H1 (cell line): ENCODE measurements at regions of chr17 and their contacts with region 1.

Region 1: DNA sequence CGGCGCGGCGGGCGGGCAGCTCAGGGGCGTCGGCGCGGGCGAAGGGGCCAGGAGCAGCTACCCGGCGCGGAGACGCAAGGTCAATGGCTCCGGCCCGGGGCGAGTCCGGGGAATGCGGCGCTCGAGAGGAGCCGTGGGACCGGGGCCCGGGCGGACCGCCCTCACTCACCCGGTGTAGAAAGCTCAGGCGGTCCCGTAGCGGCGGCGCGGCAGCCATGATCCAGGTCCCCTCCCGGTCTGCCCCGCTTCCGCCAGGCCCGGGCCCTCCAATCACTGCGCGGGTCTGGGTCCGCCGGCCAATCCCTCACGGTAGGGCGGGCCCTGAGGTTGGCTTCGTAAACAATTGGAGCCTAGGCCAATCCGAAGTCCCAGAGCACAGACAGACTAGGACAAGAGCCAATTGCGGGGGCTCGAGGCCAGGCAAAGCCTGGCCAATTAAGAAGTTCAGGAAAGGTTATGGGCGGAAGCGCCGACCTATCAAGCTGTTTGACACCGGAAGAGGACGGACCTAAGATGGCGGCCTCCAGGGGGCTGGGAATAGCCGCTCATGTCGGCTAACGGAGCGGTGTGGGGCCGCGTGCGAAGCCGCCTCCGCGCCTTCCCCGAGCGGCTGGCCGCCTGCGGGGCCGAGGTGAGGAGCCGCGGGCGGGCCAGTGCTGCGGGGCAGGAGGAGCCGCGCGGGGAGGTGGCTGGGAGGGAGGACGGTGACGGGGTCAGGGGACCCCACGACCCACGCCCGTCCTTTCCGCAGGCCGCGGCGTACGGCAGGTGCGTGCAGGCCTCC is at the starts of genes NDUFAF8 and TEPSIN:
- DNase-seq: peak; percentile 91 to 93
- H3K4me3 ChIP-seq: peak within 1 kb of the TSS; percentile 79 to 95 (median 82)
- H3K27ac ChIP-seq: peak within 1 kb of the TSS; percentile 58; the same call in 1 of the 2 replicates
- H3K4me1 ChIP-seq: peaks cover 0 to 12% (median 9%) of the 10 kb centered on the region in 4 experiments; a peak in 5 of 7 replicates
- H3K27me3 ChIP-seq: no peaks in the 10 kb centered on the region
- CTCF ChIP-seq: no peak
- EP300 ChIP-seq: no peak
- POLR2A ChIP-seq: peak in 1 of 2 experiments; percentile 47; a peak in 2 of 3 replicates
- RAD21 ChIP-seq: no peak
- total RNA-seq, gene NDUFAF8: 48.9 and 60.2 TPM in 2 replicates
- total RNA-seq, gene TEPSIN: 22.9 and 26.0 TPM in 2 replicates

Region 2: DNA sequence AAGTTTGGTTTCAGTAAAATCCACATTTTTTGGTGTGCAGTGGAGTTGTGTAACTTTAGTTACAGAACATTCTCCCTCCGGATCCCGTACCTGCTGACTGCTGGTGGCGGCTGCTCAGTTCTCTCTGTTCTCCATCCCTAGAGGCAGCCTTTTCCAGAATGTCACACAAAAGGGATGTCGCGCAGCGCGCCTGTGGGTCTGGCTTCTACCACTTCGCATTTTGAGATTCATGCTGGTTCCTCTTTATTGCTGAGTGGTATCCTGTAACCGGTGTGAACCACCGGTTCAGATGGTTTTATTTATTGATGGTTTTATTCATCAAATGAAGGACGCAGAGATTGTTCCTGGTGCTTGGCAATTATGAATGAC is 15.3 kb before region 1 on chr17:
- CTCF ChIA-PET with region 1: interaction called, 3 read pairs
- POLR2A ChIA-PET with region 1: interaction called, 18 read pairs
- DNase-seq: no peak
- H3K4me3 ChIP-seq: peak overlapping the region; percentile 47 to 62 (median 59)
- H3K27ac ChIP-seq: no peak overlapping the region
- H3K4me1 ChIP-seq: peaks cover 0 to 12% (median 9%) of the 10 kb centered on the region in 4 experiments; a peak in 5 of 7 replicates
- H3K27me3 ChIP-seq: peaks cover 0 to 2% (median 0%) of the 10 kb centered on the region in 4 experiments; a peak in 2 of 7 replicates
- CTCF ChIP-seq: no peak
- EP300 ChIP-seq: no peak
- POLR2A ChIP-seq: no peak
- RAD21 ChIP-seq: no peak